ENCODE measurements at regions of chr1 and their contacts with region 1.

Region 1: GRCh38 chr1:59699227-59699847 is 115.4 kb upstream of the HOOK1 start:
- DNase-seq: peak; percentile 19
- ATAC-seq: peak; percentile 69
- H3K4me3 Mint-ChIP-seq: no peak overlapping the region
- H3K27ac Mint-ChIP-seq: no peak overlapping the region
- H3K4me1 Mint-ChIP-seq: peaks cover 23% of the 10 kb centered on the region
- H3K27me3 Mint-ChIP-seq: no peaks in the 10 kb centered on the region
- CTCF ChIP-seq: peak; percentile 94

Region 2: DNA sequence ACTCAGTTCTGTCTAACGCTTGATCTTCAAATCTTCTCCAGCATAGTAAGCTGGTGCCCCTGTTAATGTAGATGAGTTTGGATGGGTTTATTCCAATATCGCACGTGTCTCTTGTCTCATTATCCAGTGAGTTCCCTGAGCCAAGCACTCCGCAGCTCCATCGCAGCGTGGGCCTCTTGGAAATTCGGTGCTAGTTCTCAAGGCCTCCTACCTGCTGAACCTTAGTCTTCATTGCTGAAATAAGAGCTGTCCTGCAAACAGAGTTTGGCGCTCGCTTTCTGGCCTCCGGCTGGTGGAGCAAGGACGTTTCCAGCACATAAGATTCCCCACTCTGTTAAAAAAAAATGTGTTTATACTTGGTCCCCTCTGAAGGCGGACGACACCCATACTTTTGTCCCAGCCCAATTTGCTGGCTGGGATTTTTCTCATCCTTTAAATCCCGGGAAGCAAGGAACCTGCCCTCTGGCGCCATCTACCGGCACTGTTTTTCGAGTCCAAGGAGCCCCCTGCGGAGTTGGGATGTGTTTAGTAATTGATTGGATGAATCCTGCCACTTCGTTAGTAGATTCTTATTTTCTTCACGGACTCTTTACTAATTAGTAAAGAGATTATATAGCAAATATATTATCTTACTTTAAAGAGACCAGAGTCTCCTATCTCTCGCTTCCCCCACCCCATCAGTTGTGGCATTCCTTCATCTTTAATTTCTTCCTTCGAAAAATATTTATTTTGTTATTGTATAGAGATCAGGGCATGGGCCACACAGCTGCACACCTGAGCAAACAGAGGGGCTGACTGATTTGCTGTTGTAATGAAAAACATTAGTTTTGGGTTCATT is 930.1 kb before region 1 on chr1:
- CTCF ChIA-PET with region 1: interaction called, 11 read pairs
- POLR2A ChIA-PET with region 1: no interaction called
- intact Hi-C with region 1: no loop called
- DNase-seq: peak; percentile 65
- ATAC-seq: no peak
- H3K4me3 Mint-ChIP-seq: no peak overlapping the region
- H3K27ac Mint-ChIP-seq: no peak overlapping the region
- H3K4me1 Mint-ChIP-seq: peaks cover 7% of the 10 kb centered on the region
- H3K27me3 Mint-ChIP-seq: no peaks in the 10 kb centered on the region
- CTCF ChIP-seq: peak; percentile 96

Region 3: GRCh38 chr1:59432531-59433439 is 266.6 kb before region 1 on chr1:
- CTCF ChIA-PET with region 1: no interaction called
- POLR2A ChIA-PET with region 1: no interaction called
- intact Hi-C with region 1: no loop called
- DNase-seq: peak; percentile 39
- ATAC-seq: peak; percentile 88
- H3K4me3 Mint-ChIP-seq: no peak overlapping the region
- H3K27ac Mint-ChIP-seq: peak overlapping the region; percentile 66
- H3K4me1 Mint-ChIP-seq: peaks cover 23% of the 10 kb centered on the region
- H3K27me3 Mint-ChIP-seq: no peaks in the 10 kb centered on the region
- CTCF ChIP-seq: no peak

Region 4: DNA sequence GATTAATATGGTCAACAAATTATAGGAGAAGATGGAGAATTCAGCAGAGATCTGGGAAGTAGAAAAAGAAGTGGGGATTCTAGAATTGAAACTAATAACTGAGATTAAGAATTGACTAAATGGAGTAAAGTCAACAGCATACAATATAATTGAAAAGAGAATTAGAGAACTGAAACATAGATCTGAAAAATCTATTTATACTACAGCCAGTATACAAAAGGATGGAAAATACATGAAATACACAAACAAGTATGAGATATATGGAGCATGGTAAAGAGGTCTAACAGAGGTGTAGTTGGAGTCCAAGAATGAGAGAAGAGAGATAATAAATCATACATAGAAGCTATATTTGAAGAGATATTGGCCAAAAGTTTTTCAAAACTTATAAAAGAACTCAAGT is 167.2 kb before region 1 on chr1:
- CTCF ChIA-PET with region 1: no interaction called
- POLR2A ChIA-PET with region 1: no interaction called
- intact Hi-C with region 1: no loop called
- DNase-seq: no peak
- ATAC-seq: no peak
- H3K4me3 Mint-ChIP-seq: no peak overlapping the region
- H3K27ac Mint-ChIP-seq: no peak overlapping the region
- H3K4me1 Mint-ChIP-seq: no peaks in the 10 kb centered on the region
- H3K27me3 Mint-ChIP-seq: no peaks in the 10 kb centered on the region
- CTCF ChIP-seq: no peak

Region 5: GRCh38 chr1:59759156-59759925 is 60.0 kb after region 1 on chr1:
- CTCF ChIA-PET with region 1: interaction called, 27 read pairs
- POLR2A ChIA-PET with region 1: no interaction called
- intact Hi-C with region 1: no loop called
- DNase-seq: peak; percentile 78
- ATAC-seq: peak; percentile 97
- H3K4me3 Mint-ChIP-seq: peak overlapping the region; percentile 35
- H3K27ac Mint-ChIP-seq: no peak overlapping the region
- H3K4me1 Mint-ChIP-seq: peaks cover 2% of the 10 kb centered on the region
- H3K27me3 Mint-ChIP-seq: no peaks in the 10 kb centered on the region
- CTCF ChIP-seq: peak; percentile 90

Measured in activated CD8-positive, alpha-beta T cell treated with anti-CD3 and anti-CD28 coated beads for 36 hours (primary cell).